Activated T-helper 2 cell treated with anti-CD3 and anti-CD28 coated beads, Interferon-gamma antibody, Interleukin-2, Interleukin-4, amounts not matched to agents 10 μg/mL and 5 μg/mL and 100 μg/mL, durations not matched to agents 14 hours and 24 hours and 36 hours (primary cell): ENCODE measurements at regions of chr4 and their contacts with region 1.

Region 1: DNA sequence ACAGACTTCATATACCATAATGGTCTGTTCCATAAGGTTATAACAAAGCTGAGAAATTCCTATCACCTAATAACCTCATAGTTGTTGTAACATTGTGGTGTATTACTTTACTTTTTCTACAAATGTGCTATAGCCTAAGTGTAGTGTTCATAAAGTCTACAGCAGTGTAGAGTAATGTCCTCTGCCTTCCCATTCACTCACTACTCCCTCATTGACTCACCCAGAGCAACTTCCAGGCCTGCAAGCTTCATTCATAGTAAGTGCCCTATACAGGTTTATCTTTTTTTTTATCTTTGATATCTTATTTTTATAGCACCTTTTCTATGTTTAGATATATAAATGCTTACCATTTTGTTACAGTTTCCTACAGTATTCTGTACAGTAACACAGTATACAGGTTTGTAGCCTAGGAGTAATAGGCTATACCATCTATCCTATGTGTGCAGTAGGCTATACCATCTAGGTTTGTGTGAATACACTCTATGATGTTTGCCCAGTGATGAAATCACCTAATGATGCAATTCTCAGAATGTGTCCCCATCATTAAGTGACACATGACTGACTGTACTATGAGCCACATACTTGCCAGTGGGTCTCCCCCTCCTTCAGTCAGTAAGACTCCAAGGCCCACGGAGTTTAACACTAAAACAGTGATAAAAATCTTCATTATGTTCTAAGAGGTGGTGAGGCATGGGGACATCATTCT is 299.9 kb downstream of the UNC5C start:
- DNase-seq: no peak
- H3K4me3 Mint-ChIP-seq: no peak overlapping the region
- H3K27ac Mint-ChIP-seq: peak overlapping the region; percentile 88
- H3K4me1 Mint-ChIP-seq: peaks cover 34% of the 10 kb centered on the region
- H3K27me3 Mint-ChIP-seq: no peaks in the 10 kb centered on the region

Region 2: GRCh38 chr4:95155759-95156451 is 93.0 kb before region 1 on chr4:
- intact Hi-C with region 1: loop called (anchors 2 kb)
- DNase-seq: no peak
- H3K4me3 Mint-ChIP-seq: peak overlapping the region; percentile 54
- H3K27ac Mint-ChIP-seq: peak overlapping the region; percentile 78
- H3K4me1 Mint-ChIP-seq: peaks cover 22% of the 10 kb centered on the region
- H3K27me3 Mint-ChIP-seq: no peaks in the 10 kb centered on the region

Region 3: DNA sequence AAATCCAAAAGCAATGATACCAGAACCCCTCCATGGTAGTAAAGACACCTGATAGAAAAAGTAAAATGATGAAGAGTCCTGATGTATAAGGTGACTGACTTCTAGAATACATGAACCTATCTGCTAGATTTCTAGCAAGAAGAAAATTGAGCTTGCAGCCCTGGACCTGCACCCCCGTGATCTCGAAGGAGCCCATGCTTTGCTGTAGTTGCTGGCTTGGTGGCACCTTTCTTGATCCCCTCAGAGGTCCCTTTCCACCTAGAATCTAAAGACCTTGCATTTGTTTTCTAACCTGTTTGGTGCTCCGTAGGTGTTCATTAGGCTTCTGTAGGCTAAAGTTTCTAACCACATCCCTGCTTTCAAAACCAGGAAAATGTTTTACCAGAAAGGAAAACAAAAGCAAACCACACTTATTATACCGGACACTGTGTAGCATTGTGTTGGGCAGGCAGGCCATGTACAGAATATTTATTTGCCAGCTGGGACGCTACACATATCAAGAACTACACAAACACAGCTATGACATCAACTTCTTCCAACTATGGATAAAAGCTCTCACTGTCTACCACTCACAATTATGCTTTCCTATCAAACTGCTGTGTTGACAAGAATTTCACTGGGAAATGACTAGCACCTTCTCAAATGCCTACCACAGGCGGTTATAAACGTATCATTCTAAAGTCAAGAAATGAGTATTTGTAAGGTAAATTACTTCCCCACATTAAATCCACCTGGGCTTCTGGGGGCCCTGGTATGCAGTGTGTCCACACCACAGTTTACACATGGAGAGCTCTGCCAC is 16.3 kb before region 1 on chr4:
- intact Hi-C with region 1: loop called (anchors 2 kb)
- DNase-seq: no peak
- H3K4me3 Mint-ChIP-seq: no peak overlapping the region
- H3K27ac Mint-ChIP-seq: no peak overlapping the region
- H3K4me1 Mint-ChIP-seq: peaks cover 11% of the 10 kb centered on the region
- H3K27me3 Mint-ChIP-seq: no peaks in the 10 kb centered on the region

Region 4: DNA sequence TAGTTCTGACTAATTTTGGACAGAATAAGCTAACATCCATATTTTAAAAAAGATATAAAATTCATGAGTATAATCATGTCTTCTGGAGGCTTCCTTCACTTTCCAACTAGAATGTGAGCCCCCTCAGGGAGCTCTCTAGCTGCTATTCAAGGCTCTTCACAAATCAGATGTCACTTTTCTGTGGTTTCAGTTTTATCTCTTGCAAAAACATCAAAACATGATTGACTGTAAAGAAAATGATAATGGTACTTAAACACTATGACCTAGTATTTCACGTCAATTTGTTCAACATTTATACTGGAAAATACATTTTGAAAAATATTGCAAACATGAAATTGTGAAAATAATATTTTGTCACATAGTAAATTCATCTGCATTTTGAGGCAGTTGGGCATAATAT is 65.7 kb after region 1 on chr4:
- intact Hi-C with region 1: loop called (anchors 1 kb)
- DNase-seq: no peak
- H3K4me3 Mint-ChIP-seq: no peak overlapping the region
- H3K27ac Mint-ChIP-seq: no peak overlapping the region
- H3K4me1 Mint-ChIP-seq: peaks cover 13% of the 10 kb centered on the region
- H3K27me3 Mint-ChIP-seq: peaks cover 2% of the 10 kb centered on the region